CD8-positive, alpha-beta T cell (primary cell): ENCODE measurements at regions of chr17 and their contacts with region 1.

Region 1: GRCh38 chr17:46002311-46002972 is 3.4 kb downstream of the STH start:
- DNase-seq: peak; percentile 60 to 87 (median 76)
- ATAC-seq: peak; percentile 96
- H3K4me3 ChIP-seq: no peak overlapping the region
- H3K4me3 Mint-ChIP-seq: no peak overlapping the region
- H3K27ac ChIP-seq: no peak overlapping the region
- H3K27ac Mint-ChIP-seq: no peak overlapping the region
- H3K4me1 ChIP-seq: no peaks in the 10 kb centered on the region
- H3K4me1 Mint-ChIP-seq: no peaks in the 10 kb centered on the region
- H3K27me3 ChIP-seq: no peaks in the 10 kb centered on the region
- H3K27me3 Mint-ChIP-seq: peaks cover 3% of the 10 kb centered on the region
- CTCF ChIP-seq: peak; percentile 84

Region 2: DNA sequence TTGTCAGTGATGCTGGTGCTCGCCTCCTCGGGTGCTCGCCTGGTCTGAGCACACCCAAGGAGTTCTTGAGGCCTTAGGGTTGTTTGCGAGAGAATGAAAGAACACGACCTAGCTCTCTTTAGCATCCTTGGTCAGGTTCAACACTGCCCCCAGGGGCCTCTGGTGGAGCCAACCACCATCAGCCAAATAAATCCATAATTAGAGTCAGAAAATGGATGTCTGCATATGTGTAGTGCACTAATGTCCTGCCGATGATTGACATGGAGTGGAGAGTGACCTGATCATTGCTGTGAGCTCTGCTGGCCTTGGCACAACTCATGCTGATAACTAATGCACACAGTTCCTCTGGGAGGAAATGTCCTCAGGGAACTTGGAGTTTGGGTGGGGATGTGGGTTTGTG is 11.6 kb before region 1 on chr17:
- CTCF ChIA-PET with region 1: interaction called, 24 read pairs
- POLR2A ChIA-PET with region 1: no interaction called
- intact Hi-C with region 1: no loop called
- DNase-seq: no peak
- ATAC-seq: no peak
- H3K4me3 ChIP-seq: no peak overlapping the region
- H3K4me3 Mint-ChIP-seq: no peak overlapping the region
- H3K27ac ChIP-seq: no peak overlapping the region
- H3K27ac Mint-ChIP-seq: no peak overlapping the region
- H3K4me1 ChIP-seq: no peaks in the 10 kb centered on the region
- H3K4me1 Mint-ChIP-seq: no peaks in the 10 kb centered on the region
- H3K27me3 ChIP-seq: no peaks in the 10 kb centered on the region
- H3K27me3 Mint-ChIP-seq: peaks cover 2% of the 10 kb centered on the region
- CTCF ChIP-seq: no peak

Region 3: GRCh38 chr17:46035112-46035818 is 32.8 kb after region 1 on chr17:
- CTCF ChIA-PET with region 1: interaction called, 12 read pairs
- POLR2A ChIA-PET with region 1: no interaction called
- intact Hi-C with region 1: no loop called
- DNase-seq: peak in 2 of 9 experiments; percentile 55 to 63
- ATAC-seq: no peak
- H3K4me3 ChIP-seq: no peak overlapping the region
- H3K4me3 Mint-ChIP-seq: no peak overlapping the region
- H3K27ac ChIP-seq: peak overlapping the region in 1 of 2 experiments; percentile 21
- H3K27ac Mint-ChIP-seq: peak overlapping the region; percentile 60
- H3K4me1 ChIP-seq: no peaks in the 10 kb centered on the region
- H3K4me1 Mint-ChIP-seq: peaks cover 3% of the 10 kb centered on the region
- H3K27me3 ChIP-seq: no peaks in the 10 kb centered on the region
- H3K27me3 Mint-ChIP-seq: no peaks in the 10 kb centered on the region
- CTCF ChIP-seq: no peak

Region 4: GRCh38 chr17:46044286-46044928 is 42.0 kb after region 1 on chr17:
- CTCF ChIA-PET with region 1: interaction called, 12 read pairs
- POLR2A ChIA-PET with region 1: no interaction called
- intact Hi-C with region 1: loop called (anchors 1 kb)
- DNase-seq: peak; percentile 12 to 76 (median 59)
- ATAC-seq: peak; percentile 56
- H3K4me3 ChIP-seq: no peak overlapping the region
- H3K4me3 Mint-ChIP-seq: no peak overlapping the region
- H3K27ac ChIP-seq: no peak overlapping the region
- H3K27ac Mint-ChIP-seq: peak overlapping the region; percentile 56
- H3K4me1 ChIP-seq: no peaks in the 10 kb centered on the region
- H3K4me1 Mint-ChIP-seq: peaks cover 16% of the 10 kb centered on the region
- H3K27me3 ChIP-seq: no peaks in the 10 kb centered on the region
- H3K27me3 Mint-ChIP-seq: no peaks in the 10 kb centered on the region
- CTCF ChIP-seq: peak; percentile 81

Region 5: DNA sequence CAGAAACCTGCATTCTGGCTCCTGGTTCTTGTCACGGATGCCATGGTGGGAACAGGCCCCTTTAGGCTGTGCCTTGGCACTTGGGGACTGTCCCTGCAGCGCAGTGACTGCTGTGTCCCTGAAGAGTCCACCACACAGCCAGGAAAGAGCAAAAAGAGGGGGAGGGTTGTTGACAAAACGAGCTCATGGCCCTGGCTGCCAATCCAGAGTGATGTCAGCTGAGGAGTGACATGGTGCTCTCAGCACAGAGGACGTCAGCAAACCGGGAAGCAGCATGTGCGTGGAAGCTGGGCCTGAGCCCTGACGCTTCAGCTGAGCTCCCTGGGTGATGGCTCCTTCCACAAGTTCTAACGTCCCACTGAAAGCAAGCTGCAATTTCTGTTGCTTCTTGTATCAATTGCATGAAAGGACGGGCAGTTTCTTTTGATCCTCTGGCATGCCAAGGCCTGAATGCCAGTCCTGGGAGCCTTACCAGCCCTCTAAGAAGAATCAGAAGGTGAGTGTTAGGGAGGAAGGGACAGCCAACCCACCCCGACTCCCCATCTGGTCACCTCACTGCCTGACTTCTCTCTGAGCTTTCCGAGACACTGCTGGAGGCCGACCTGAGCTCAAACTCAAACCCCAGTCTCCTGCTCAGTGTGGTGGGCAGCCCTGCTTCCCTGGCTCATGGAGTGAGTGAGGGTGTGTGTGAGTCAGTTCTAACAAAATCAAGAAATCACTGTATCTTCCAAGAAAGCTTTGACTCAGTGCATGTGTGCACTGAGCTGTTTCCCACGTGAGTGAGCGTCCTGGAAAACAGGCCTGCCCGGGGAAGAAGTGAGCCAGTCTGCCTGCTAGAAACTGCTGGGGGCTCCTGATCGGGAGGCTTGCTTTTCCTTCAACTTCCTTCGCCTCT is 830.8 kb after region 1 on chr17:
- CTCF ChIA-PET with region 1: no interaction called
- POLR2A ChIA-PET with region 1: no interaction called
- intact Hi-C with region 1: loop called in 1 of 2 experiments (anchors 5 kb)
- DNase-seq: no peak
- ATAC-seq: no peak
- H3K4me3 ChIP-seq: no peak overlapping the region
- H3K4me3 Mint-ChIP-seq: no peak overlapping the region
- H3K27ac ChIP-seq: no peak overlapping the region
- H3K27ac Mint-ChIP-seq: no peak overlapping the region
- H3K4me1 ChIP-seq: no peaks in the 10 kb centered on the region
- H3K4me1 Mint-ChIP-seq: peaks cover 4% of the 10 kb centered on the region
- H3K27me3 ChIP-seq: no peaks in the 10 kb centered on the region
- H3K27me3 Mint-ChIP-seq: peaks cover 15% of the 10 kb centered on the region
- CTCF ChIP-seq: no peak